Calu3 (cell line): ENCODE measurements at regions of chr15 and their contacts with region 1.

Region 1: DNA sequence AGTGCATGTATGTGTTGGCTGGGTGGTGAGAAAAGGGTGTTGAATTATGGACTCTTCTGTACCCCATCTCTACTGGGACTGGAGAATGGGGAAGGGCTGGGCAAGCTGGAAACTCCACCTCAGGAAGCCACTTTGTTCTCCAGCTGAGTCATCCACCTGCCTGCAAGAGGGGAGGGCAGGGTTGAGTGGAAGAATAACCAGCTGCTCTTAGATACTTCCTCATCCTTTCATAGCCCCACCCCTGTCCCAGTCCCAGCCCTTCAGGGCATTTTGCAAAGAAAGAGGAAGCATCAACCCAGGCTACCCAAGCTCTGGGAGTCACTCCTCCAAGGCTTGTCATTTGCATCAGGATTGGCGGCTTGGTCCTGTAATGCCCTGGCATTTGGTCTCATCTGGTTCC is 33.1 kb downstream of the RAB11A start:
- DNase-seq: peak; percentile 92
- H3K4me3 Mint-ChIP-seq: peak overlapping the region; percentile 39
- H3K27ac Mint-ChIP-seq: peak overlapping the region; percentile 72
- H3K4me1 Mint-ChIP-seq: peaks cover 62% of the 10 kb centered on the region
- H3K27me3 Mint-ChIP-seq: no peaks in the 10 kb centered on the region
- CTCF ChIP-seq: no peak

Region 2: GRCh38 chr15:65712415-65712814 is 190.0 kb before region 1 on chr15:
- CTCF ChIA-PET with region 1: no interaction called
- intact Hi-C with region 1: no loop called
- DNase-seq: no peak
- H3K4me3 Mint-ChIP-seq: no peak overlapping the region
- H3K27ac Mint-ChIP-seq: no peak overlapping the region
- H3K4me1 Mint-ChIP-seq: no peaks in the 10 kb centered on the region
- H3K27me3 Mint-ChIP-seq: no peaks in the 10 kb centered on the region
- CTCF ChIP-seq: no peak

Region 3: GRCh38 chr15:66287461-66288057 is 385.2 kb after region 1 on chr15:
- CTCF ChIA-PET with region 1: no interaction called
- intact Hi-C with region 1: loop called (anchors 10 kb)
- DNase-seq: no peak
- H3K4me3 Mint-ChIP-seq: no peak overlapping the region
- H3K27ac Mint-ChIP-seq: no peak overlapping the region
- H3K4me1 Mint-ChIP-seq: peaks cover 16% of the 10 kb centered on the region
- H3K27me3 Mint-ChIP-seq: no peaks in the 10 kb centered on the region
- CTCF ChIP-seq: peak; percentile 58